ENCODE measurements at regions of chr10 and their contacts with region 1.

Region 1: GRCh38 chr10:30413996-30414576 is 19.9 kb upstream of the MAP3K8 start:
- DNase-seq: no peak
- H3K4me3 ChIP-seq: no peak overlapping the region
- H3K27ac ChIP-seq: no peak overlapping the region
- H3K4me1 ChIP-seq: peaks cover 0 to 10% (median 6%) of the 10 kb centered on the region in 4 donors
- H3K27me3 ChIP-seq: no peaks in the 10 kb centered on the region
- CTCF ChIP-seq: peak; percentile 75 to 94 (median 75)
- EP300 ChIP-seq: no peak
- POLR2A ChIP-seq: no peak

Region 2: DNA sequence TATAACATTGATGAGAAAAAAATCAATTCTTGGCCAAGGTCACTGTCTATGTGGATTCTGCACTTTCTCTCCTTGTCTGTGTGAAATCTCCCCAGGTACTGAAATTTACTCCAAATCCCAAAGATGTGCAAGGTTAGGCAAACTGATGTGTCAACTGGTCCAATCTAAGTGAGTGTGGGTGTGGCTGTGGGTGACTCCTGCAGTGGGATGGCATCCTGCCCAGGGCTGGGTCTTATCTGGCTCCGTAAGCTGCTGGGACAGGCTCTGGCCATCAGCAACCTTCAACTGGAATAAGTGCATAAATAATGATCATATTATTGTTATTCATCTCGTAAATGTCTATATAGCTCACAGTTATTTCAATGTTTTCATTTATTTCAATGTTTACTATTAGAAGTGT is 434.0 kb before region 1 on chr10:
- in situ Hi-C with region 1: no loop called
- intact Hi-C with region 1: no loop called
- DNase-seq: no peak
- H3K4me3 ChIP-seq: no peak overlapping the region
- H3K27ac ChIP-seq: no peak overlapping the region
- H3K4me1 ChIP-seq: no peaks in the 10 kb centered on the region
- H3K27me3 ChIP-seq: no peaks in the 10 kb centered on the region
- CTCF ChIP-seq: no peak
- EP300 ChIP-seq: no peak
- POLR2A ChIP-seq: no peak

Region 3: GRCh38 chr10:30534465-30535144 is 120.5 kb after region 1 on chr10:
- in situ Hi-C with region 1: loop called (anchors 5 to 10 kb)
- intact Hi-C with region 1: loop called (anchors 5 kb)
- DNase-seq: peak; percentile 80
- H3K4me3 ChIP-seq: no peak overlapping the region
- H3K27ac ChIP-seq: no peak overlapping the region
- H3K4me1 ChIP-seq: peaks cover 0 to 8% (median 0%) of the 10 kb centered on the region in 4 donors
- H3K27me3 ChIP-seq: no peaks in the 10 kb centered on the region
- CTCF ChIP-seq: peak; percentile 86 to 93 (median 90)
- EP300 ChIP-seq: no peak
- POLR2A ChIP-seq: no peak

Measured in transverse colon (tissue), 4 donors.